ENCODE measurements at regions of chr20 and their contacts with region 1.

Region 1: GRCh38 chr20:15491575-15491974 is 1081.7 kb downstream of the KIF16B start:
- DNase-seq: peak; percentile 66
- ATAC-seq: no peak
- H3K4me3 ChIP-seq: no peak overlapping the region
- H3K27ac ChIP-seq: no peak overlapping the region
- H3K4me1 ChIP-seq: peaks cover 9% of the 10 kb centered on the region; the same call in 1 of the 2 replicates
- H3K27me3 ChIP-seq: no peaks in the 10 kb centered on the region
- CTCF ChIP-seq: peak; percentile 85

Region 2: GRCh38 chr20:15406072-15406471 is 85.5 kb before region 1 on chr20:
- CTCF ChIA-PET with region 1: interaction called, 3 read pairs
- POLR2A ChIA-PET with region 1: no interaction called
- intact Hi-C with region 1: loop called (anchors 5 kb)
- DNase-seq: peak; percentile 95
- ATAC-seq: peak; percentile 92
- H3K4me3 ChIP-seq: no peak overlapping the region
- H3K27ac ChIP-seq: peak overlapping the region; percentile 30; the same call in 1 of the 2 replicates
- H3K4me1 ChIP-seq: peaks cover 14% of the 10 kb centered on the region
- H3K27me3 ChIP-seq: no peaks in the 10 kb centered on the region
- CTCF ChIP-seq: no peak

Region 3: GRCh38 chr20:15455279-15455678 is 36.3 kb before region 1 on chr20:
- CTCF ChIA-PET with region 1: no interaction called
- POLR2A ChIA-PET with region 1: no interaction called
- intact Hi-C with region 1: loop called (anchors 1 kb)
- DNase-seq: peak; percentile 51
- ATAC-seq: peak; percentile 90
- H3K4me3 ChIP-seq: no peak overlapping the region
- H3K27ac ChIP-seq: no peak overlapping the region
- H3K4me1 ChIP-seq: no peaks in the 10 kb centered on the region
- H3K27me3 ChIP-seq: no peaks in the 10 kb centered on the region
- CTCF ChIP-seq: no peak

Region 4: GRCh38 chr20:15656124-15656523 is 164.5 kb after region 1 on chr20:
- CTCF ChIA-PET with region 1: no interaction called
- POLR2A ChIA-PET with region 1: no interaction called
- intact Hi-C with region 1: loop called (anchors 1 kb)
- DNase-seq: peak; percentile 79
- ATAC-seq: peak; percentile 95
- H3K4me3 ChIP-seq: no peak overlapping the region
- H3K27ac ChIP-seq: no peak overlapping the region
- H3K4me1 ChIP-seq: peaks cover 22% of the 10 kb centered on the region
- H3K27me3 ChIP-seq: no peaks in the 10 kb centered on the region
- CTCF ChIP-seq: no peak

Region 5: DNA sequence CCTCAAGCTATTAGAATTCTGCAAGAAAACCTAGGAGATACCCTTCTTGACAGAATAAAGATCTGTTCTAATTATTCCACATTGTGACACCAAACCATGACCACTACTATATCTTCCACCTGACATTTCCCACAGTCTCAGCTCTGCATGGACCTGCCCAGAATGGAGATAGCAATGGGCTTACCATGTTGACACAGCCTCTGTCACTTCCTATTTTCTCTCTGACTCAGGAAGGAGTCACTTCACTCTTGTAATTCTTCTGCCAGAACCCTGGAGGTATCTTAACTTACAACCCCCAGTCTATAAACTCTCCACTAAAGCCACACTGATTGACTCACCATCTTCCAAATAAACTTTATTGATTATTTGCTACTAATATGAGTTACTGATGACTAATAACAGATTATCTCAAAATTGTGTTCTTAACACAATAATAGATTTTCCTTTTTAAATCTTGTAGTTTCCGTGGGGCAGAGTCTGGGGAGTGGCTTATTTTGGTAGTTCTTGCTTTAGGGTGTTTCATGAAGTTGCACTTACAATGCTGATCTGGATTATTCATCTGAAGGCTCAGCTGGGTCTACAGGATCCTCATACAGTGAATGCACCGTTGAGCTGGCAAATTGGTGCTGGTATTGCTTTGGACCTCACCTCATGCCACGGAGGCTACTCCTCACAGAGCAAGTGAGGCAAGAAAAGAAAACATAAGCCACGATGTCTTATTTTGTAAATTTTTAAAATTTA is 211.8 kb after region 1 on chr20:
- CTCF ChIA-PET with region 1: no interaction called
- POLR2A ChIA-PET with region 1: no interaction called
- intact Hi-C with region 1: loop called (anchors 1 kb)
- DNase-seq: peak; percentile 99
- ATAC-seq: peak; percentile 98
- H3K4me3 ChIP-seq: no peak overlapping the region
- H3K27ac ChIP-seq: peak overlapping the region; percentile 88
- H3K4me1 ChIP-seq: peaks cover 39% of the 10 kb centered on the region
- H3K27me3 ChIP-seq: no peaks in the 10 kb centered on the region
- CTCF ChIP-seq: no peak

Region 6: DNA sequence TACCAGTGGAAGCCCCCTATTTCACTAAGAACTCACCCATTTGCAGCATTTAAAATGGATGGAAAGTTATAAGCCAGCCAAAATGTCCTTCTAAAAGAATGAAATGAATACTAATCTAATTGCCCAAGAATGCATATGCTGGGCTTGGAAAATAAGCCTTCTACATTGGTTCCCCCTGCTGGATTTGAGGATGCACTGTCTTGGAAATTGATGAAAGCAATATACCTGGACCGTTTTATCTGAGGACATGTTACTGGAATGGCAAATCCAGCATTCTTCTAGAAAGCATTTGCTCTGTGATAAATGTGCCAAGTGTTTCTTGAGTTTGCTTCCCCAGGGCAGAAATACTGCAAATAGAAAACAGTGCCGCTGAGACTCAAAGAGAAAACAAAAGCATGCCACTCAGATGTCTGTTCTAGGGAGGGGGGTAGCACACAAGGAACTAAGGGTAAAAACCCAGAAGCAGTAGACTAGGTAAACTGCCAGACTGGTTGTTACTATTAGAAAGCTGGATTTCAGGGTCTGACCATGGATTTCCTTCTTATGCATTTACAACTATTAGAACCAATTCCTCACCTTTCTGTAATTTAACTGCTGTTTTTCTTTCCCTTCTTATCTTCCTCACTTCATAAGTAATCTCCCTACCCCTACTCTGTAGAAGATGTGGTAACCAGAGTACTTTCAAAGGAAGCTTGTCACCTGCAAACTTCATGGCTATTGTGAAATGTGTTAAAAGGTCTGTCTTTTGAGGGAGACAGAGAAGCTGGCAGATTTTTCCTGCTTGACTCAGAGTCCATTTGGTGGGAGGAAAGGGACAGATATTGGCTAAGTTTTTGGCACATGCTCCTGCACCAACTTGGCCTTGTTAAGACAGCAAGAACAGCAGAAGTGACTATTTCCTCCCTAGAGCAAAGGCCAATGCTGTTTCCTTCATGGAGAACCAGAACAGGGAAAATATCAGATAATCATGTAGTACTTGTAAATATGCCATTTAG is 439.0 kb after region 1 on chr20:
- CTCF ChIA-PET with region 1: no interaction called
- POLR2A ChIA-PET with region 1: no interaction called
- intact Hi-C with region 1: loop called (anchors 1 kb)
- DNase-seq: peak; percentile 84
- ATAC-seq: peak; percentile 93
- H3K4me3 ChIP-seq: no peak overlapping the region
- H3K27ac ChIP-seq: no peak overlapping the region
- H3K4me1 ChIP-seq: peaks cover 20% of the 10 kb centered on the region
- H3K27me3 ChIP-seq: no peaks in the 10 kb centered on the region
- CTCF ChIP-seq: peak; percentile 92

Region 7: DNA sequence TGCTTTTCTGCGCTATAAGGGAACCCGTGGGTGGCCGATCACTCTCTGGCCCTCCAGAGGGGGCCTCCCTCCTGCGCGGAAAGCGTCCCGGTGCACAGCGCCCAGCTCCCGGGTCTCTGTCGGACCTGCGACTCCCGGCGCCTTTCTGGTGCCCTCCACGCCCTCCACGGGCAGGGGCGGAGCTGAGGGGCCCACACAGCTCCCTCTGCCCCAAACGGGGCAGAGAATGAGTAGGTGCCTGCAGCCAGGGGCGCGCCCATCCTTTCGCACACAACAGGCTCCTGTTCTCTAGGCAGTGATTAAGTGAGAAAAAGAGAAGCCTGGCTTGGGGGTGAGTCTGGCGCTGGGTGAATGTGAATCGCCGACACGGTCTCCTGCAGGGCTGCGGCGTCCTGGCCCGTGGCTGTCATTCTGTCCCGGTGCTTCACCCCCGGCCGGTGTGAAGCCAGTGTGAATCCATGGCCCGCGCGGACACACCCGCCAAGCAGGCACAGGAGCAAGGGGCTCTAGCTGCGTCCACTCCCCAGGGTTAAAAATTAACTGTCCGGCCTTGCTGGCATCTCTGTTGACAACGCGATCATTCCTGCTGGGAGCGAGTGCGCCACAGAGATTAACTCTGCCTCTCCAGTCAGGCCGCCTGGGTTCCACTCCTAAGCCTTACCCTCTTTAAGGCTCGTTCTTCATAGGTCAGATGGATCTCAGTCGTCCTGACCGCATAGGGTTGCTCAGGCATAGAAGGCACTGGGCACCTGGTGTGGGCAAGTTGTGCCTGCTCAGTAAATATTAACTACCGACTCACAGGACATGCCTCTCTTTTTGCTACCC is 1824.0 kb after region 1 on chr20:
- CTCF ChIA-PET with region 1: no interaction called
- POLR2A ChIA-PET with region 1: no interaction called
- intact Hi-C with region 1: no loop called
- DNase-seq: no peak
- ATAC-seq: no peak
- H3K4me3 ChIP-seq: no peak overlapping the region
- H3K27ac ChIP-seq: no peak overlapping the region
- H3K4me1 ChIP-seq: no peaks in the 10 kb centered on the region
- H3K27me3 ChIP-seq: peaks cover 96% of the 10 kb centered on the region
- CTCF ChIP-seq: no peak

Measured in PC-3 (cell line).